OCI-LY7 (cell line): ENCODE measurements at regions of chr16 and their contacts with region 1.

Region 1: GRCh38 chr16:17277977-17278381 is 192.8 kb downstream of the XYLT1 start:
- DNase-seq: peak; percentile 74
- H3K4me3 ChIP-seq: peak overlapping the region; percentile 21
- H3K27ac ChIP-seq: peak overlapping the region; percentile 6
- H3K4me1 ChIP-seq: peaks cover 63% of the 10 kb centered on the region
- CTCF ChIP-seq: peak; percentile 82

Region 2: DNA sequence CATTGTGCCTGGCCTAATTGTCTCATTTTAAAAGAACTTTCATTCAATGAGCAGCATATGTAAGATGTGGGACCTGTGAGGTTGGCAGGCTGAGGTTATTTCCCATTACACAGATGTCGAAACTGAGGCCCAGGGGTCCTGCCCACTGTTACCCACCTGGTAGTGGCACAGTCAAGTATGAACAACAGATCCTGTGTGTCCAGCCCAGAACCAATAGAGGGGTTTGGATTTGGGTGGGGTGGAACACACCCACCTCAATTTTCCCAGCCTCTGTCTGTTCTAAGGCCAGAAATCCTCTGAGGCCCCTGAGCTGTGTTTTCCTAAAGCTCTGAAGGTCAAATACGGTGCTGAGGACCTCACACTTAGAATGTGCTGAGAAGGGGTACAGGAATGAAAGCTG is 13.3 kb after region 1 on chr16:
- CTCF ChIA-PET with region 1: interaction called, 5 read pairs
- POLR2A ChIA-PET with region 1: interaction called, 10 read pairs
- intact Hi-C with region 1: no loop called
- DNase-seq: no peak
- H3K4me3 ChIP-seq: no peak overlapping the region
- H3K27ac ChIP-seq: no peak overlapping the region
- H3K4me1 ChIP-seq: peaks cover 39% of the 10 kb centered on the region
- CTCF ChIP-seq: no peak